ENCODE measurements at regions of chr2 and their contacts with region 1.

Region 1: DNA sequence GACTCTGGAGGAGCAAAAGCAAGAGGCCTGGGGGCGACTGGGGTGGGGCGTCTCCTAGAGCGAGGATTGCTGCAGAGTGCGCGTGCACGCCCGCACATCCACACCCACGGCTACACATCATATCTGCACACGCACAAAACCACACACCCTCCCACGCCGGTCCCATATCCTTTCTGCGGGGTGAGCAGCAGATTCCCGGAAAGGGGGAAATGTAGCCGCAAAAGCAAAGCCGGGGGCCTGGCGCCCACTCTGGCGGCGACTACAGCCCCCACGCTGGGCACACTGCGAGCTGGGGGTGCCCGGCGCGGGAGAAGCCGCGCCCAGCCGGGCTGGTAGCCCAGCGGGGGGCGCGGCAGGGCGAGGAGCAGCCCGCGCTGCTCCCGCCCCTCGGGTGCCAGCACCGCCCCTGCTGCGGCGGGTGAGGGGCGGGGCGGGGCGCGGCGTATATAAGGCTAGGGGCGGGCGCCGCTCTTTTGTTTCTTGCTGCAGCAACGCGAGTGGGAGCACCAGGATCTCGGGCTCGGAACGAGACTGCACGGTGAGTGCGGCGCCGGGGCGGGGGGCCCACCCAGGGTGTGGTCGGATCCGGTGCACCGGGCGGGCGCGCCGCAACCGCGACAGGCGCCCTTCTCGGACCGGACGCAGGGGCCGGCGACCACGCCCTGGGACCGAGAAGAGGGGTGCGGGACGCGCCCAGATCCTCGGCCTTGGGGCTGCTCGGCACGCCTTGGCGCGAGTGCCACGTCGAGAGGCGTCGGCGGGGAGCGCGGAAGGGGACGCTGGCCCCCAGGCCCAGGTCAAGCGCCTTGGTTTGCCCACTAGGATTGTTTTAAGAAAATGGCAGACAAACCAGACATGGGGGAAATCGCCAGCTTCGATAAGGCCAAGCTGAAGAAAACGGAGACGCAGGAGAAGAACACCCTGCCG is at the start of gene TMSB10:
- DNase-seq: peak; percentile 80
- ATAC-seq: peak; percentile 84
- H3K4me3 ChIP-seq: peak within 1 kb of the TSS; percentile 86
- H3K27ac ChIP-seq: peak within 1 kb of the TSS; percentile 93
- H3K4me1 ChIP-seq: peaks cover 2% of the 10 kb centered on the region; the same call in 1 of the 2 replicates
- H3K27me3 ChIP-seq: no peaks in the 10 kb centered on the region
- CTCF ChIP-seq: 0 out of 2 replicates have a peak, but pooled peaks have one; percentile 19
- POLR2A ChIP-seq: peak; percentile 99
- RAD21 ChIP-seq: no peak
- total RNA-seq, gene TMSB10: 842 and 3,620 TPM in 2 replicates

Region 2: DNA sequence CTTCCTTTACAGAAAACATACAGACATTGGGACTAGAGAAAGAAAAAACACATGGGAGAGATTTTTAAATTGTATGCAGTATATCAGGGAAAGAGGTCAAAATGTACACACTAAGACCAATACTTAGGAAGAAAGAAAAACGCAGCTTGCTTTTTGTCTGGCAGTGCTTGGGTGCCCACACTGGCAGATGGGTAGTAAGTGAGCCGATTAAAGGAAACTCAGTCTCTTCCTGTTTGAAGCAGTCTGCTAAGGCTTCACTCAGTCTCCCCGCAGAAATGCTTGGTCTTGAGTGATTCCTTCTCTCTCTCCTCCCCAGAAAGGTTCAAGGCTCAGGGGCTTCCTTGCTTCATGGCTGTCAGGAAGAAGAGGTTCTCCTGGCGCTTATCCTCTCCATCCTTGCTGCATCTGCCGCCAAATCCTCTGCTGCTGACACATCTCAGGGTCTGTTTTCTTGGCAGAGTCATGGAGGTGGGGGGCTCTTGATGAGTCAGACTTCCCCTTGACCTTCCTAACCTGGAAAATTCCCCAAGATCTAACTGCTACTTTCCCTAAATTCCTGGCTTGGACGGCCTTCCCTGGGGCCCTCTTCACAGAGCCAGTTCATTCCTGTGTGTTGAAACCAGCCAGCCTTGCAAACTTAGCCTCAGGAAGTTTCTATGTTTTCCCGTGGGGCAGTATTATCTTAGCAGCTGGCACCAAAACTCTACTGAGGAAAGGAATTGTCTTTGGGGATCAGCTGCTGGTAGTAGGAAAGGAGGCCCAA is 10.5 kb before region 1 on chr2:
- CTCF ChIA-PET with region 1: no interaction called
- POLR2A ChIA-PET with region 1: interaction called, 14 read pairs
- dilution Hi-C with region 1: no loop called
- in situ Hi-C with region 1: no loop called
- intact Hi-C with region 1: no loop called
- DNase-seq: peak; percentile 52
- ATAC-seq: peak; percentile 50
- H3K4me3 ChIP-seq: no peak overlapping the region
- H3K27ac ChIP-seq: peak overlapping the region; percentile 85
- H3K4me1 ChIP-seq: peaks cover 17% of the 10 kb centered on the region
- H3K27me3 ChIP-seq: no peaks in the 10 kb centered on the region
- CTCF ChIP-seq: no peak
- POLR2A ChIP-seq: no peak
- RAD21 ChIP-seq: no peak

Region 3: DNA sequence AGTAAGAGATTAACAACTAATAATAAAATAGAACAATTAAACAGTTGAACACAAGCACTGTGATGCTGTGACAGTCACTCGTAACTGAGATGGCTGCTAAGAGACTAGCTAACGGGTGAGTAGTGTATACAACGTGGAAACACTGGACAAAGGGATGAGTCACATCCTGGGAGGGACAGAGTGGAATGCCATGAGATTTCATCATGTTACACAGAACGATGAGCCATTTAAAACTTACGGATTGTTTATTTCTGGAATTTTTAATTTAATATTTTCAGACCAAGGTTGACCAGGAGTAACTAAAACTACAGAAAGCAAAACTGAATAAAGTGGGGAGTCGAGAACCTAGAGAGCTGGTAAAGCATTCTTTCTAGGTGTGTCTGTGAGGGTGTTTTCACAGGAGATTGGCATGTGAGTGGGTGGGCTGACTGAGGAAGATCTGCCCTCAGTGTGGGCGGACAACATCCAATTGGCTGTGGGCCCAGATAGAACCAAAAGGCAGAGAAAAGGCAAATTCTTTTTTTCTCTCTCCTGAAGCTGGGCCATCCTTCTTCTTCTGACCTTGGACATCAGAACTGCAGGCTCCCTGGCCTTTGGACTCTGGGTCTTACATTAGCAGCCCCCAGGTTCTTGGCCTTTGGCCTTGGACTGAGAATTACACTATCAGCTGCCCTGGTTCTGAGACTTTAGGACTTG is 14.6 kb after region 1 on chr2:
- CTCF ChIA-PET with region 1: interaction called, 3 read pairs
- POLR2A ChIA-PET with region 1: interaction called, 31 read pairs
- dilution Hi-C with region 1: no loop called
- in situ Hi-C with region 1: no loop called
- intact Hi-C with region 1: loop called (anchors 1 kb)
- DNase-seq: peak; percentile 99
- ATAC-seq: peak; percentile 94
- H3K4me3 ChIP-seq: peak overlapping the region; percentile 18; the same call in 1 of the 2 replicates
- H3K27ac ChIP-seq: peak overlapping the region; percentile 97
- H3K4me1 ChIP-seq: peaks cover 8% of the 10 kb centered on the region; the same call in 1 of the 2 replicates
- H3K27me3 ChIP-seq: no peaks in the 10 kb centered on the region
- CTCF ChIP-seq: no peak
- POLR2A ChIP-seq: peak; percentile 74; the same call in 1 of the 2 replicates
- RAD21 ChIP-seq: no peak

Region 4: GRCh38 chr2:84939426-84940087 is 34.1 kb after region 1 on chr2:
- CTCF ChIA-PET with region 1: no interaction called
- POLR2A ChIA-PET with region 1: no interaction called
- dilution Hi-C with region 1: no loop called
- in situ Hi-C with region 1: no loop called
- intact Hi-C with region 1: no loop called
- DNase-seq: no peak
- ATAC-seq: no peak
- H3K4me3 ChIP-seq: no peak overlapping the region
- H3K27ac ChIP-seq: no peak overlapping the region
- H3K4me1 ChIP-seq: no peaks in the 10 kb centered on the region; the same call in 1 of the 2 replicates
- H3K27me3 ChIP-seq: no peaks in the 10 kb centered on the region
- CTCF ChIP-seq: no peak
- POLR2A ChIP-seq: no peak
- RAD21 ChIP-seq: no peak

Measured in IMR-90 (cell line).